HepG2 (cell line): ENCODE measurements at regions of chr12 and their contacts with region 1.

Region 1: GRCh38 chr12:2057041-2057794 is 4.4 kb downstream of the CACNA1C start:
- DNase-seq: peak; percentile 56
- ATAC-seq: peak; percentile 78
- H3K4me3 ChIP-seq: no peak overlapping the region
- H3K27ac ChIP-seq: no peak overlapping the region
- H3K4me1 ChIP-seq: peaks cover 5% of the 10 kb centered on the region; the same call in 1 of the 2 replicates
- H3K27me3 ChIP-seq: peaks cover 3 to 83% of the 10 kb centered on the region in 2 experiments
- CTCF ChIP-seq: peak; percentile 94
- EP300 ChIP-seq: no peak
- POLR2A ChIP-seq: no peak
- RAD21 ChIP-seq: peak; percentile 76

Region 2: GRCh38 chr12:737122-737739 is 1320.0 kb before region 1 on chr12:
- CTCF ChIA-PET with region 1: no interaction called
- POLR2A ChIA-PET with region 1: no interaction called
- in situ Hi-C with region 1: no loop called
- intact Hi-C with region 1: no loop called
- DNase-seq: no peak
- ATAC-seq: no peak
- H3K4me3 ChIP-seq: no peak overlapping the region
- H3K27ac ChIP-seq: no peak overlapping the region
- H3K4me1 ChIP-seq: peaks cover 43% of the 10 kb centered on the region
- H3K27me3 ChIP-seq: no peaks in the 10 kb centered on the region
- CTCF ChIP-seq: no peak
- EP300 ChIP-seq: no peak
- POLR2A ChIP-seq: no peak
- RAD21 ChIP-seq: no peak

Region 3: GRCh38 chr12:1836849-1837421 is 220.3 kb before region 1 on chr12:
- CTCF ChIA-PET with region 1: no interaction called
- POLR2A ChIA-PET with region 1: no interaction called
- in situ Hi-C with region 1: no loop called
- intact Hi-C with region 1: no loop called
- DNase-seq: peak; percentile 17
- ATAC-seq: peak; percentile 40
- H3K4me3 ChIP-seq: no peak overlapping the region; a peak in 1 of 6 replicates
- H3K27ac ChIP-seq: no peak overlapping the region
- H3K4me1 ChIP-seq: peaks cover 61% of the 10 kb centered on the region
- H3K27me3 ChIP-seq: peaks cover 3 to 33% of the 10 kb centered on the region in 2 experiments; a peak in 4 of 5 replicates
- CTCF ChIP-seq: no peak
- EP300 ChIP-seq: no peak
- POLR2A ChIP-seq: no peak
- RAD21 ChIP-seq: no peak

Region 4: GRCh38 chr12:2284857-2285256 is 227.6 kb after region 1 on chr12:
- CTCF ChIA-PET with region 1: interaction called, 19 read pairs
- POLR2A ChIA-PET with region 1: no interaction called
- in situ Hi-C with region 1: loop called (anchors 5 kb)
- intact Hi-C with region 1: loop called (anchors 1 kb)
- DNase-seq: peak; percentile 29
- ATAC-seq: peak; percentile 98
- H3K4me3 ChIP-seq: no peak overlapping the region
- H3K27ac ChIP-seq: no peak overlapping the region
- H3K4me1 ChIP-seq: no peaks in the 10 kb centered on the region
- H3K27me3 ChIP-seq: peaks cover 6 to 55% of the 10 kb centered on the region in 2 experiments
- CTCF ChIP-seq: peak; percentile 87
- EP300 ChIP-seq: no peak
- POLR2A ChIP-seq: no peak
- RAD21 ChIP-seq: peak; percentile 69

Region 5: DNA sequence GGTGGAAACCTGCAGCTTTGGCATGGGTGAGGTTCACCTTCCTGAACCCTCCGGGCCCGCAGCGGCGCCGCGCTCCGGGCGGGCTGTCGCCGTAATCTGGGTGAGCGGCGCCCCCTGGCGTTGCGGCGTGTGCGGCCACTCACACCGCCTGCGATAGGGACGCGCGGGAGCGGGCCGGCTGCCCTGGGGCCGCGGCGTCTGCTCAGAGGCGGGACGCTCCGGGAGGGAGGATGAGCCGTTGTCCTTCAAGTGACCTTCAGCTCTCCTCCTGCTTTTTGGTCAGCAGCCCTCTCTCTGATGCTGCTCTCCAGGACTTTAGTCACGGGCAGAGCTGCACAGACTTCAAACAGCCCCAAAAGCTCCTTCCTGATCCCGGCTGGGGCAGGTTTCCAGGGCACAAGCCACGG is 525.9 kb after region 1 on chr12:
- CTCF ChIA-PET with region 1: interaction called, 5 read pairs
- POLR2A ChIA-PET with region 1: no interaction called
- in situ Hi-C with region 1: loop called (anchors 10 kb)
- intact Hi-C with region 1: no loop called
- DNase-seq: peak; percentile 22
- ATAC-seq: peak; percentile 96
- H3K4me3 ChIP-seq: no peak overlapping the region
- H3K27ac ChIP-seq: no peak overlapping the region
- H3K4me1 ChIP-seq: no peaks in the 10 kb centered on the region
- H3K27me3 ChIP-seq: peaks cover 10 to 73% of the 10 kb centered on the region in 2 experiments
- CTCF ChIP-seq: peak; percentile 89
- EP300 ChIP-seq: no peak
- POLR2A ChIP-seq: no peak
- RAD21 ChIP-seq: peak; percentile 87